ENCODE measurements at regions of chr20 and their contacts with region 1.

Region 1: GRCh38 chr20:49132995-49133478 is 55.1 kb downstream of the STAU1 start:
- DNase-seq: peak; percentile 30
- ATAC-seq: peak; percentile 53
- H3K4me3 Mint-ChIP-seq: no peak overlapping the region
- H3K27ac Mint-ChIP-seq: no peak overlapping the region
- H3K4me1 Mint-ChIP-seq: peaks cover 6% of the 10 kb centered on the region
- H3K27me3 Mint-ChIP-seq: no peaks in the 10 kb centered on the region

Region 2: GRCh38 chr20:49063279-49063678 is 69.8 kb before region 1 on chr20:
- CTCF ChIA-PET with region 1: no interaction called
- POLR2A ChIA-PET with region 1: no interaction called
- DNase-seq: no peak
- ATAC-seq: no peak
- H3K4me3 Mint-ChIP-seq: no peak overlapping the region
- H3K27ac Mint-ChIP-seq: no peak overlapping the region
- H3K4me1 Mint-ChIP-seq: no peaks in the 10 kb centered on the region
- H3K27me3 Mint-ChIP-seq: no peaks in the 10 kb centered on the region

Region 3: GRCh38 chr20:49179368-49180277 is 46.6 kb after region 1 on chr20:
- CTCF ChIA-PET with region 1: interaction called, 40 read pairs
- POLR2A ChIA-PET with region 1: interaction called, 3 read pairs
- DNase-seq: no peak
- ATAC-seq: no peak
- H3K4me3 Mint-ChIP-seq: no peak overlapping the region
- H3K27ac Mint-ChIP-seq: peak overlapping the region; percentile 54
- H3K4me1 Mint-ChIP-seq: peaks cover 53% of the 10 kb centered on the region
- H3K27me3 Mint-ChIP-seq: no peaks in the 10 kb centered on the region

Region 4: DNA sequence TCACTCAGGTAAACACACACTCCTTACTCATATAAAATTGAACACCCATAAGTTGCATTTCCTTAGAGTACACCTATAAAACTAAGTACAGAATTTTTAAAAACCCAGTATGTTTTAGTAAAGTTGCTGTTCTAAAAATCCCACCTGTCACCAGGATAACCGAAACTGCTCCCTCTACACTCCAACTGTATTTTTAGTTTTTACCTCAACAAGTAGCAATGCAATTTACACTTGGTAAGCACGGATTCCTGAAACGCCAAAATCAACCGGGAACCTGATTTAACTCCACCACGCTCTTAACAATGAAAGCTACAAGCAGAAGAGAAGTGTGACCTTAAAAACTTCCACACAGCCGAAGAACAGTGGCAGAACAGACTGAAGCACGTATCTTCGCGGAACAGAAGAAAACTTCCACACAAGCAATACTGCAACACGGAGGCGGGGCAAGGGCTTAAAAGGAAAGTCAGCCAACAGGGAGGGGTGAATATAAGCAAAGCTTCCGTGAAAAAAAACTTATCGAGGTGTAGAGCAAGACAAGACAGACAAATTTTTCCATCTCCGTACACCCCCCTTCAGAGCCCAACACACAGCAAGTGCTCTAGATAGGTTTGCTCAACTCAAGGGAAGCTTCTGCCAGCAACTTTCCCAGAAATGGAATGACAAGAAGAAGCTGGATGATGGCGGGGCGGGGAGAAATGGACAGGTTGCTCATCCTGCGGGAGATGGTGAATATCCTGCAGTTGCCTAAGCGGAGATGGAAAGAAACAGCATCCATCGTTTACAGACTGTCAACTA is 53.7 kb after region 1 on chr20:
- CTCF ChIA-PET with region 1: interaction called, 40 read pairs
- POLR2A ChIA-PET with region 1: interaction called, 9 read pairs
- DNase-seq: peak; percentile 75
- ATAC-seq: peak; percentile 41
- H3K4me3 Mint-ChIP-seq: peak overlapping the region; percentile 83
- H3K27ac Mint-ChIP-seq: peak overlapping the region; percentile 79
- H3K4me1 Mint-ChIP-seq: peaks cover 48% of the 10 kb centered on the region
- H3K27me3 Mint-ChIP-seq: peaks cover 6% of the 10 kb centered on the region

Measured in activated CD8-positive, alpha-beta T cell treated with anti-CD3 and anti-CD28 coated beads, Interleukin-2, amount 10 ng/mL, durations not matched to agents 7 days and 5 days (primary cell).